GM12878 (cell line): ENCODE measurements at regions of chr15 and their contacts with region 1.

Region 1: DNA sequence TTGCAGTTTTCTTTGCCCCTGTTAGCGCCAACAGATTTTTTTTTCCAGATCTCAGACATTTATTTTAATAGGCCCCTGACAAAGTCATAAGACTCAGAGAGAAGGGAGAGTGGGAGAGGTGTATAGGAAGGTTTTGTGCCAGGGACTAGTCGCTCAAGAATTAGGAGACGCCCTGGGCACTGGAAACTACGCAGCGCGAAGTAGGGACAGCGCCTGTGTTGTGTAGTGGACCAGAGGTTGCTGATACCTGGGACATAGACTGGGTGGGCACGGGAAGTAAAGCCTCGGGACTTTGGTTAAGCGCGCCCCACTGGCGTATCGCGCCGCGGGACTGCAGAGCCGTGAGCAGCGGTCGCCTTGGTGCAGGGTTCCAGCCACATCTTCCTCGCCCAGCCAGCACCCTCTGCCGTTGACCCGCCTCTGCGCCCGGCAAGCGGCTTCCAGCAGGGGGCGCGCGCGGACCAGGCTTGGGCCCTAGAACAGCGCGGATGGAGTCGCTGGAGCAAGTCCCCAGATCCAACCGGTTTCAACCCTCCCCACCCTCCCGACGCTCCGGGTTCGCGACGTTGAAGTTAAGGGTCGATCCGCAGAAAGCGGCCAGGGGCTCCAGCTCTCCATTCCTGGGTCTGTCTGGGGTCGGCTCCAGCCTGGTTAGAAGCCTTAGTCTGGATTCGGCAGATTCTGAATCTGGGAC is 3.0 kb upstream of the ISLR2 start:
- DNase-seq: no peak
- ATAC-seq: peak; percentile 98
- H3K4me3 ChIP-seq: peak overlapping the region; percentile 57; the same call in 1 of the 2 replicates
- H3K27ac ChIP-seq: no peak overlapping the region
- H3K4me1 ChIP-seq: peaks cover 15% of the 10 kb centered on the region
- H3K27me3 ChIP-seq: peaks cover 21 to 37% of the 10 kb centered on the region in 2 experiments
- CTCF ChIP-seq: peak; percentile 95 to 100 (median 99); a peak in 5 of 6 replicates
- EP300 ChIP-seq: no peak
- POLR2A ChIP-seq: no peak
- RAD21 ChIP-seq: peak; percentile 99

Region 2: DNA sequence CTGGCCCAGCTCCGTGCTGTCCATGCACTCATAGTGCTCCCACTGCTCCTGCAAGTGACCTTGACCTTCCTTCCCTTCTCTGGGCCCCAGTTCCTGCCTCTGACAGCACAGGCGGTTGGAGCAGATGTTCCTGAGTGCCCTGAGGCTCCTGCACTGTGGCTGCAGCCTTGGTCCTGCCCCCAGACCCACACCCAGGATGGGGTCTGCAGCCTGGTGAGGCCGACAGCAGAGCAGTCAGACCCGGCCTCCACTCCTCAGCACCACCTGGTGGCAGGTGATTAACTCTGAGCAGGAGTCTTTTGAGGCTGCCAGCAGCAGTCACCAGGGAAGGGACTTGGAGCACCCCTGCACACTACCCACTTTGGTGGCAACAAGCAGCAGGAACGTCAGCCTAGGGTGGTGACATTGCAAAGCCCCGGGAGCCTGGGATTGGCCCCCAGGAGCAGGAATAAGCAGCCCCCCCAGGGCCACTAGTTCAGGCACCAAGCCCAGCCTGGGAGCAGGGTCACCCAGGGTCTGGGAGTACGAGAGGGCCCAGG is 175.5 kb after region 1 on chr15:
- CTCF ChIA-PET with region 1: interaction called, 14 read pairs
- POLR2A ChIA-PET with region 1: no interaction called
- RAD21 ChIA-PET with region 1: interaction called, 5 read pairs
- SMC1A ChIA-PET with region 1: interaction called, 4 read pairs
- in situ Hi-C with region 1: loop called (anchors 5 kb)
- intact Hi-C with region 1: loop called (anchors 1 kb)
- DNase-seq: no peak
- ATAC-seq: peak; percentile 84
- H3K4me3 ChIP-seq: no peak overlapping the region
- H3K27ac ChIP-seq: no peak overlapping the region
- H3K4me1 ChIP-seq: no peaks in the 10 kb centered on the region
- H3K27me3 ChIP-seq: peaks cover 2 to 14% of the 10 kb centered on the region in 2 experiments; a peak in 3 of 4 replicates
- CTCF ChIP-seq: peak; percentile 68 to 74 (median 71)
- EP300 ChIP-seq: no peak
- POLR2A ChIP-seq: no peak
- RAD21 ChIP-seq: peak; percentile 79

Region 3: GRCh38 chr15:74307827-74308644 is 180.6 kb after region 1 on chr15:
- CTCF ChIA-PET with region 1: interaction called, 14 read pairs
- POLR2A ChIA-PET with region 1: no interaction called
- RAD21 ChIA-PET with region 1: interaction called, 5 read pairs
- SMC1A ChIA-PET with region 1: interaction called, 6 read pairs
- in situ Hi-C with region 1: loop called (anchors 5 kb)
- intact Hi-C with region 1: loop called (anchors 1 kb)
- DNase-seq: no peak
- ATAC-seq: peak; percentile 89
- H3K4me3 ChIP-seq: no peak overlapping the region
- H3K27ac ChIP-seq: no peak overlapping the region
- H3K4me1 ChIP-seq: no peaks in the 10 kb centered on the region
- H3K27me3 ChIP-seq: peaks cover 0 to 2% of the 10 kb centered on the region in 2 experiments; a peak in 2 of 4 replicates
- CTCF ChIP-seq: peak; percentile 68 to 79 (median 75)
- EP300 ChIP-seq: no peak
- POLR2A ChIP-seq: no peak
- RAD21 ChIP-seq: peak; percentile 94

Region 4: GRCh38 chr15:74322181-74323076 is 195.0 kb after region 1 on chr15:
- CTCF ChIA-PET with region 1: interaction called, 26 read pairs
- POLR2A ChIA-PET with region 1: no interaction called
- RAD21 ChIA-PET with region 1: interaction called, 4 read pairs
- SMC1A ChIA-PET with region 1: interaction called, 7 read pairs
- in situ Hi-C with region 1: no loop called
- intact Hi-C with region 1: loop called (anchors 1 kb)
- DNase-seq: no peak
- ATAC-seq: peak; percentile 95
- H3K4me3 ChIP-seq: no peak overlapping the region
- H3K27ac ChIP-seq: no peak overlapping the region
- H3K4me1 ChIP-seq: peaks cover 30% of the 10 kb centered on the region
- H3K27me3 ChIP-seq: no peaks in the 10 kb centered on the region
- CTCF ChIP-seq: peak; percentile 94 to 96 (median 94)
- EP300 ChIP-seq: no peak
- POLR2A ChIP-seq: no peak
- RAD21 ChIP-seq: peak; percentile 91